ENCODE measurements at regions of chr7 and their contacts with region 1.

Region 1: DNA sequence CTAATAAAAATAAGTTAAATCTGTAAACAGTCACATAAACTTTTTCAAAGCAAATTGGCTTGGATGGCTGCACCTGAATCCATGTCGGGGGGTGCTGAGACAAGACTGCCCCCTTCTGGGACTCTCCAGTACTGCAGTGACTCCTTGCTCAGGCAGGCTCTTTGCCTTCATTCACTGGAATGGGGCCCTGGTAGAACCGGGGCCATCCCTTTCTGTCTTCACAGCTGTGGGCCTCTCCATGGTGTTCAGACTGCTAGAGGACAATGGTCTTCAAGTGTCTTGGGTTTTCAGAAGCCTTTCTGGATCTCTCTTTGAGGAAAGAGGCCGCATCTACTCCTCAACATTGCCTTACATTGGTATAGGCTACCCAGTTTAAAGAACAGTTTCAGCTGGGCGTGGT is 16.1 kb upstream of the IMPDH1 start:
- DNase-seq: peak; percentile 84
- ATAC-seq: peak; percentile 60
- H3K4me3 Mint-ChIP-seq: no peak overlapping the region
- H3K27ac Mint-ChIP-seq: no peak overlapping the region
- H3K4me1 Mint-ChIP-seq: peaks cover 26% of the 10 kb centered on the region
- H3K27me3 Mint-ChIP-seq: peaks cover 9% of the 10 kb centered on the region

Region 2: DNA sequence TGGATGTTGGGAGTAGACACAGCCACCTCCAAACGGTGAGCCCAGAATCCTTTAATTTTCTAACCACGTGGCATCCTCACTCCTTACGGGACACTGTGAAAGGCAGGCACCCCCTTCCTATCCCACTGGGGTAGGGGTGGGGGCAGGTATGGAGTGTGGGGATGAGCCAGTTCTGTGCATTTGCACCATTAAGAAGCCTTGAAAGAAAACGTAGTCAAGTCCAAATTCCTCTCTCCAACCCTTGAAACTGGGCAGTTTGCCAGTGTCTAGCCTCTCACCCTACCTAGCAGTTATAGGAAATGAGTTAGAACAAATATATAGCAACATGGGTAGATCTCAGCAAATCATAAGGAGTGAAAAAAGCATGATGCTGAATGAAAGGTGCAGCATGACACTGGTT is 277.2 kb before region 1 on chr7:
- CTCF ChIA-PET with region 1: no interaction called
- DNase-seq: no peak
- ATAC-seq: no peak
- H3K4me3 Mint-ChIP-seq: no peak overlapping the region
- H3K27ac Mint-ChIP-seq: no peak overlapping the region
- H3K4me1 Mint-ChIP-seq: no peaks in the 10 kb centered on the region
- H3K27me3 Mint-ChIP-seq: peaks cover 54% of the 10 kb centered on the region

Region 3: DNA sequence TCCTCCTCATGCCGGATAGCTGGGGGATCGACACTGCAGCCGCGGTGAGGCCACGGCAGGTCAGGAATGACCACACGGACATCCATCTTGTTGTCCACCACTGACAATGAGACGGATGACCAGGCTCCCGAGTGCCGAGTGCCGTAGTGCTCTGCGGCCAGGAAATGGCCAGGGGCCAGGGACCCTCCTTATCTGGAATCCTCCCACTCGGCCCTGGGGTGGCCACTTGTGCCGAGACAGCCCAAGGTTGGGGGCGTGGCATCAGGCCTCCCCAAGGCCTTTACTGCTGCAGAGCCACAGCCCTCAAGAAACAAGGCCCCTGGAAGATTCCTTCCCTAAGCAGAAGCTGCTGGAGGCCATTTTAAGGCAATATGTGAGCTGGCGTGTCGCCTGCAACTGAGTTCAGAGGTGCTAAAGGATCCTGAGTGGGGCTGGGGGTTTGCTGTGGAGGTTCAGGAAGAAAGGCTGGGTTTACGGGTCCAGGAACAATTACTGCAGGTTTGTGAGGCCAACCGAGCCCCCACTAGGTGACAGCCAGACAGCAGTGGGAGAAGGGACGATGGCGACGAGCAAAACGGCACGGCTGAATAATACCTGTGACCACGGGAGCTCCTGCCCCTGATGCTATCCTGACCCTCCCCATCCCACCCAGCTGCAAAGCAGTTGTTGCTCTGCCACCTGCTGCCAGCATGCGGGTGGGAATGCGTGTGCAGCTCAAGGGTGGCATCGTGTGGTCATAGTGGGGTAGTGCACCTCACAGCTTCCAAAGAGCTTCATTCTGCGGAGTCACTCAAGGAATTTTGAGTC is 216.4 kb before region 1 on chr7:
- CTCF ChIA-PET with region 1: no interaction called
- DNase-seq: peak; percentile 72
- ATAC-seq: peak; percentile 79
- H3K4me3 Mint-ChIP-seq: no peak overlapping the region
- H3K27ac Mint-ChIP-seq: no peak overlapping the region
- H3K4me1 Mint-ChIP-seq: no peaks in the 10 kb centered on the region
- H3K27me3 Mint-ChIP-seq: peaks cover 10% of the 10 kb centered on the region

Region 4: DNA sequence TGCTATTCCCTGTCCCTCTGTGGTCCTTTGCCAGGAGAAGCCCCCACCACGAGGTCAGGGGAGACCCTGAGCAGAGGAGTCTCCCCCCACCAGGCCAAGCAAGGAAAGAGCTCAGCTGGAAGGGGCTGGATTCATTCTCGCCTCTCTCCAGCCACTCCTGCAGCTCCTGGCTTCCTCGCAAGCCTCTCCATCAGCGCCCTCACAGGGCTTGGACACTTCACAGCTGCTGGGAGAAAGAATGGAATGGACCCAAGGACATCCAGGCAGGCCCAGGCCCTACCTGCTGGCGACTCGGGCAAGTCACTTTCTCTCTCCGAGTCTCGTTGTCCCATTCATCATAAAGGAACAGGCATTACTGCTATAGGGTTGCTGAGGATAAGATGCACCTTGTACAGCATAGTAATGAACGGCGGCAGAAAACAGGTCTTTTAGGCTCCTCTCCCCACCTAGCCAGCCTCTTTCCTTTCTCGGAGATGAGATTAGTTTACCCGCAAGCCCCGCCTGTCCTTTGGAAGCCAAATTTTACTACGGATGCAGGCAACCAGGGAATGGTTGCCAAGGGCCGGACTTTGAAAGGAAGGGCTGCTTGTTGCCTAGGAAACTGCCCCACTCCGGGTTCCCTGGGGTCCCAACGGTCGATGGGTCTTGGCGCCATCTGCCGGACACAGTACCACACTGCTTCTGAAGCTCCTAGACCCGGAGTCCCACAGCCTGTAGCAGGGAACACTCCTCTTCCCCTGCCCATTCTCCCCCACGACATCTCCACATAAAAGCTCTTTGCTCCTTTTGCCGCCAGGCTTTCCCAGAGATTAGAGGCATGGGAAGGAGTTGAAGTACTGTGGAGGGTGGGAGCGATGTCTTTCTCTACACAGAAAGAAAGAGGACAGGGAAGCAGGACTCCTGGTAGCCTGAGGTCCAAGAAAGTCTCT is 38.4 kb before region 1 on chr7:
- CTCF ChIA-PET with region 1: interaction called, 50 read pairs
- DNase-seq: peak; percentile 77
- ATAC-seq: peak; percentile 94
- H3K4me3 Mint-ChIP-seq: no peak overlapping the region
- H3K27ac Mint-ChIP-seq: no peak overlapping the region
- H3K4me1 Mint-ChIP-seq: no peaks in the 10 kb centered on the region
- H3K27me3 Mint-ChIP-seq: no peaks in the 10 kb centered on the region

Region 5: DNA sequence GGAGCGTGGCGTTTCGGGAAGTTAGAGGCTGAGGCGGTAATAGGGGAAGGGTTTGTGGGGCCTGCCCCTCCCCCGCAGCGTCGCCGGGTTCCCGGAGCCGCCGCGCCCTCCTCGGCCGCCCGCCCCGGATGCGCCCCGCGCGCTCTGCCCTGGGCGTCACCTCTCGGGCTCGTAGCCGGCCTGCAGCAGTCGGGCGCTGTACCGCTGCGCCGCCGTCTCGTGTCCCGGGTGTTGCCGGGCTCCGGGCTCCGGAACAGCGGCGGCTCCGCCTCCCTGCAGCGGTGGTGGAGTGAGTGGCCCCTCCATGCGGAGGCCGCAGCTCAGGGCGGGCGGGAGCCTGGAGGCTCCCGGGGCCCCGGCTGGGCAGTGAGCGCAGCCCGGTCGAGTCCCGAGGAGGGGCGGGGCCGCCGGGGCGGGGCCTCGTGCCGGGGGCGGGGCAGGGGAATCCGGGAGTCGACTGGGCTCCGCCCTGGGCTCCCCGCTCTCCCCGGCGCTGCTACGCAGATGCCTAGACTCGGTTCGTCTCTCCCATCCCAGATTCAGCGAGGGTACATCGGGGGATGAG is 16.2 kb before region 1 on chr7 and contains the start of gene IMPDH1:
- CTCF ChIA-PET with region 1: interaction called, 355 read pairs
- DNase-seq: peak; percentile 90
- ATAC-seq: peak; percentile 91
- H3K4me3 Mint-ChIP-seq: peak within 1 kb of the TSS; percentile 85
- H3K27ac Mint-ChIP-seq: peak within 1 kb of the TSS; percentile 74
- H3K4me1 Mint-ChIP-seq: peaks cover 18% of the 10 kb centered on the region
- H3K27me3 Mint-ChIP-seq: peaks cover 31% of the 10 kb centered on the region
- total RNA-seq, gene IMPDH1: 54.1 to 62.8 TPM

Region 6: DNA sequence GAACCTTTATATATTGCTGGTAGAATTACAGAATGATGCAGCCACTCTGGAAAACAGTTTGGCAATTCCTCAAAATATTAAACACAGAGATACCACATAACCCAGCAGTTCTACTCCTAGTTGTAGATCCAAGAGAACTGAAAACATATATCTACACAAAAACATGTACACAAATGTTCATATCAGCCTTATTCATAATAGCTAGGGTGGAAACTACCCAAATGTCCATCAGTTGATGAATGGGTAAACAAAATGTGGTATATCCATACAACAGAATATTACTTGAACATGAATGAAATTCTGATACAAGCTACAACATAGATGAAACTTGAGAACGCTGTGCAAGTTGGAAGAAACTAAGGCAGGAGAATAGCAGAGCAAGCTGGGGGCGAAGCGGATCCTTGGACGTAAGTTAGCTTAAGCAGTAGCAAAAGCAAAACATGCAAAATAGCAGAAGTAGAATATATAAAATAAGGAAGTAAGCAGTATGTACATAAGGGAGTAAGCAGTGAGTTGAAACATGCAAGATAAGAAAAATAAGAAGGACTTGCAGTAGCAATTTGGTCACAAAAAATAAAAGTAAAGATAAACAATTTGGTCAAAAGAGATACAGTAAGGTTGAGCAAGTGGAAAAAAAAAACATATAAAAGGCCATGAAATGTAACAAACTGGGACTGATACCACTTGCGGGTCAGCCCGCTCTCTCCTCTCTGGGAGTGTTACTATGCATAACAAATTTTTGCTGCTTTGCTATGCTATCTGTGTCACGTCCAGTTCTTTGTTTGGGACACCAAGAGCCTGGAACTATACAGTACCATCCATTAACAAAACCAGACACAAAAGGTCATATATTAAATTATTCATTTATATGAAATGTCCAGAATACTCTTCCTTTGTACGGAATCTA is 11.8 kb after region 1 on chr7:
- CTCF ChIA-PET with region 1: interaction called, 46 read pairs
- DNase-seq: no peak
- ATAC-seq: no peak
- H3K4me3 Mint-ChIP-seq: no peak overlapping the region
- H3K27ac Mint-ChIP-seq: no peak overlapping the region
- H3K4me1 Mint-ChIP-seq: no peaks in the 10 kb centered on the region
- H3K27me3 Mint-ChIP-seq: peaks cover 13% of the 10 kb centered on the region

Region 7: DNA sequence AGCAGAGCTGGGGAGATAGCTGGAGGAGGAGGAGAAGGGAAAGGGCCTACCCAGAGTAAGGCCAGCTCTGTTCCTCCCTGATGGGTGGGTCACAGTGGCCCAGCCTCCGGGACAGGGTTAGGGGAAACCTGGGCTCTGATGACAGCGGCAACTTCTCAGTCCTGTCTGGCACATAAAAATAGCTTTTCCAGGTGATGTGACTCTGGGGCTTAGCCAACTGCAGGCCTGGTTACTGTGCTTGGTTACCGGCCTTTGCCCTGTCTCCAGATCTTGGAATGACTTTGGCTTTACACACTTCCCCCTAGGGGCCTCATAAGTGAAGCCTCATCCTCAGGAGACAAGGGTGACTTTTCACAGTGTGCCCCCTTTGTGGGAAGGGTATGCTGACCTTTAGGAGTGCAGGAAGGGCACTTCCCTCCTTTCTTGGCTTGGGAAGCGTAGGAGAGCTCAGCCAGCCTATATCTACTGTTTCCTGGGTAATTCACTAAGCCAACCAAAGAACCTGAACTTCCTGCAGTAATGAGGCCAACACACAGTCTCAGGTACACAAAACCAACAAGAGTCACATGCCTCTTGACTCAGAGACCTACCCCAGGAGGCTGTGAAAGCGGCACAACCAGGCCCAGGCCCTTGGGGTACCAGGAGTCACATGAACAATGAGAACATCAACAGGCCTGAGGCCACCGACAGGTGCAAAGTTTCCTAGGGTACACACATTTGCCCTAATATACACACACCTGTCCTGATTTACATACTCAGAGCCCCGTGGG is 18.2 kb after region 1 on chr7:
- CTCF ChIA-PET with region 1: interaction called, 46 read pairs
- DNase-seq: no peak
- ATAC-seq: no peak
- H3K4me3 Mint-ChIP-seq: no peak overlapping the region
- H3K27ac Mint-ChIP-seq: no peak overlapping the region
- H3K4me1 Mint-ChIP-seq: peaks cover 3% of the 10 kb centered on the region
- H3K27me3 Mint-ChIP-seq: no peaks in the 10 kb centered on the region

Region 8: DNA sequence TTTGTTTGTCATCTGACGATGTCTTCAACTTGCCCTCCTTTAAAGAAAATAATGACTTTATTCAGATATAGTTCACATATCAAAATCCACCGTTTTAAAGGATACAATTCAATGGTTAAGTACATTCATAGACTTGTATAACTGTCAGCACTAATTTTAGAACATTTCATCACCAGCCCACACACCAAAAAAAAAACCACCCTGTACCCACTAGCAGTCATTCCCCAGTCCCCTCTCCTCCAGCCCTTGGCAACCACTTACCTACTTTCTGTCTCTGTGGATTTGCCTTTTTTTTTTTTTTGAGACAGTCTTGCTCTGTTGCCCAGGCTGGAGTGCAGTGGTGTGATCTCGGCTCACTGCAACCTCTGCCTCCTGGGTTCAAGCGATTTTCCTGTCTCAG is 24.6 kb after region 1 on chr7:
- CTCF ChIA-PET with region 1: interaction called, 95 read pairs
- DNase-seq: no peak
- ATAC-seq: no peak
- H3K4me3 Mint-ChIP-seq: no peak overlapping the region
- H3K27ac Mint-ChIP-seq: no peak overlapping the region
- H3K4me1 Mint-ChIP-seq: peaks cover 22% of the 10 kb centered on the region
- H3K27me3 Mint-ChIP-seq: peaks cover 32% of the 10 kb centered on the region

Region 9: GRCh38 chr7:128455551-128456254 is 29.9 kb after region 1 on chr7 and contains the start of gene HILPDA:
- CTCF ChIA-PET with region 1: interaction called, 188 read pairs
- DNase-seq: peak; percentile 95
- ATAC-seq: peak; percentile 91
- H3K4me3 Mint-ChIP-seq: peak within 1 kb of the TSS; percentile 94
- H3K27ac Mint-ChIP-seq: peak within 1 kb of the TSS; percentile 93
- H3K4me1 Mint-ChIP-seq: peaks cover 55% of the 10 kb centered on the region
- H3K27me3 Mint-ChIP-seq: peaks cover 26% of the 10 kb centered on the region
- total RNA-seq, gene HILPDA: 13.2 to 24.0 TPM